ENCODE measurements at regions of chr3 and their contacts with region 1.

Region 1: GRCh38 chr3:100169201-100169920 is 55.1 kb upstream of the FILIP1L start:
- DNase-seq: no peak
- H3K4me3 ChIP-seq: no peak overlapping the region
- H3K27ac ChIP-seq: peak overlapping the region; percentile 7 to 25
- H3K4me1 ChIP-seq: peaks cover 6 to 39% of the 10 kb centered on the region in 2 donors
- H3K27me3 ChIP-seq: no peaks in the 10 kb centered on the region
- CTCF ChIP-seq: no peak

Region 2: GRCh38 chr3:100103558-100104441 is 65.6 kb before region 1 on chr3:
- intact Hi-C with region 1: no loop called
- DNase-seq: no peak
- H3K4me3 ChIP-seq: no peak overlapping the region
- H3K27ac ChIP-seq: peak overlapping the region; percentile 66 to 70
- H3K4me1 ChIP-seq: peaks cover 9 to 64% of the 10 kb centered on the region in 2 donors
- H3K27me3 ChIP-seq: no peaks in the 10 kb centered on the region
- CTCF ChIP-seq: no peak

Region 3: DNA sequence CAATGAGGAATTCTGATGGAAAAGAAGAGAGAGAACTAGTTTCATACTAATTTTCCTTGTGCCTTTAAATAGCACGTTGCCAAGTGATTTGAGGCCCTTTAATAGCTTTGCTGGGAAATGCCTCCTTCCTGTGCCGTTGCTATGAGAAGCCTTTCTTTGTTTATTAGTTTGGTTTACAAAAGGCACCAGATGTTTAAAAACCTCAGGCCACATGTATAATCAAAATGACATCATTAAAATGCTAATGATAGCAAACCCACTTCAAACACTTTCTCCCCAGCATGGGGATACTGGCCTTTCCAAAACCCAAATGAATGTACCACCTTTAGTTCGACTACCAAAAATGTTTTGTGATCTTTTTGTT is 41.4 kb after region 1 on chr3:
- intact Hi-C with region 1: loop called (anchors 5 kb)
- DNase-seq: no peak
- H3K4me3 ChIP-seq: no peak overlapping the region
- H3K27ac ChIP-seq: peak overlapping the region; percentile 54 to 57
- H3K4me1 ChIP-seq: peaks cover 0 to 15% of the 10 kb centered on the region in 2 donors
- H3K27me3 ChIP-seq: no peaks in the 10 kb centered on the region
- CTCF ChIP-seq: no peak

Region 4: GRCh38 chr3:100245927-100246326 is 76.6 kb after region 1 on chr3:
- intact Hi-C with region 1: loop called (anchors 5 kb)
- DNase-seq: no peak
- H3K4me3 ChIP-seq: no peak overlapping the region
- H3K27ac ChIP-seq: peak overlapping the region in 1 of 2 donors; percentile 1
- H3K4me1 ChIP-seq: peaks cover 0 to 3% of the 10 kb centered on the region in 2 donors
- H3K27me3 ChIP-seq: no peaks in the 10 kb centered on the region
- CTCF ChIP-seq: no peak